Endothelial cell of umbilical vein (primary cell): ENCODE measurements at regions of chr4 and their contacts with region 1.

Region 1: DNA sequence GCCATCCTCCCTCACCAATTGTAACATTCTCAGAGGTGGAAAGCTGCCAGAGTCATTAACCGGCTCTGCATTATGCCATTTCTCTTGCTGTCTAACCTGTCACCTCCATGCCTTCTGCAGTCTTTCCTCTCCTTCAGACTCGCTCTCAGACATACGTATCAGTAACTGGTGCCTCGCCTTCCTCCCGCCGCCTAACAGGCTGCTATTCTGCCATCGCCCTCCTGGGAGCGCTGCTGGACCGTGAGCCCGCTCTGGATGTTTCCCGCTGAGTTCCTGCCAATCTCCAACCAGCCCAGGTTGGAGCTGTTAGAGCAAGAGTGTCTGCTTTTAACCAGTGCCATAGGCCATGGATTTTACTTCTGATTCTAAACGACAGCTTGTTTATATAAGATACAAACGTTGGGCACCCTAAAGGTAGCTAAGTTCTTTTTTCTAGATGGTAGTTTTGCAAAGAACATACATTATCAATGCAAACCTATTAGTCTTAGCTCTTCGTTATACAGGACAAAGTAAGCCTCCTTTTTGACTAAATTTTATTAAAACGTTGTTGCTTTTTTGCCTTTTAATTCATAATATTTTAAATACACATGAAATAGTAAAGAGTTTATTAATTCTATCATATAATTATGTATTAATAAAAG is 59.5 kb upstream of the NEIL3 start:
- DNase-seq: peak; percentile 65
- H3K4me3 ChIP-seq: no peak overlapping the region
- H3K27ac ChIP-seq: no peak overlapping the region
- H3K4me1 ChIP-seq: no peaks in the 10 kb centered on the region
- H3K27me3 ChIP-seq: peaks cover 0 to 2% of the 10 kb centered on the region in 2 experiments
- CTCF ChIP-seq: peak; percentile 87 to 94
- POLR2A ChIP-seq: no peak

Region 2: GRCh38 chr4:176377780-176378179 is 872.4 kb before region 1 on chr4:
- CTCF ChIA-PET with region 1: interaction called, 8 read pairs
- POLR2A ChIA-PET with region 1: no interaction called
- dilution Hi-C with region 1: no loop called
- intact Hi-C with region 1: loop called (anchors 2 kb)
- DNase-seq: peak; percentile 39
- H3K4me3 ChIP-seq: no peak overlapping the region
- H3K27ac ChIP-seq: no peak overlapping the region
- H3K4me1 ChIP-seq: peaks cover under 1% of the 10 kb centered on the region
- H3K27me3 ChIP-seq: peaks cover 0 to 5% of the 10 kb centered on the region in 2 experiments
- CTCF ChIP-seq: peak in 1 of 2 donors; percentile 14
- POLR2A ChIP-seq: no peak

Region 3: GRCh38 chr4:176988226-176988625 is 261.9 kb before region 1 on chr4:
- CTCF ChIA-PET with region 1: no interaction called
- POLR2A ChIA-PET with region 1: no interaction called
- dilution Hi-C with region 1: no loop called
- intact Hi-C with region 1: no loop called
- DNase-seq: peak; percentile 92
- H3K4me3 ChIP-seq: no peak overlapping the region
- H3K27ac ChIP-seq: peak overlapping the region; percentile 55
- H3K4me1 ChIP-seq: peaks cover 5% of the 10 kb centered on the region
- H3K27me3 ChIP-seq: no peaks in the 10 kb centered on the region
- CTCF ChIP-seq: no peak
- POLR2A ChIP-seq: no peak

Region 4: GRCh38 chr4:177128306-177128705 is 121.9 kb before region 1 on chr4:
- CTCF ChIA-PET with region 1: no interaction called
- POLR2A ChIA-PET with region 1: no interaction called
- dilution Hi-C with region 1: no loop called
- intact Hi-C with region 1: no loop called
- DNase-seq: peak; percentile 77
- H3K4me3 ChIP-seq: peak overlapping the region in 1 of 3 experiments; percentile 10
- H3K27ac ChIP-seq: peak overlapping the region; percentile 77
- H3K4me1 ChIP-seq: peaks cover 19% of the 10 kb centered on the region
- H3K27me3 ChIP-seq: no peaks in the 10 kb centered on the region
- CTCF ChIP-seq: no peak
- POLR2A ChIP-seq: no peak

Region 5: DNA sequence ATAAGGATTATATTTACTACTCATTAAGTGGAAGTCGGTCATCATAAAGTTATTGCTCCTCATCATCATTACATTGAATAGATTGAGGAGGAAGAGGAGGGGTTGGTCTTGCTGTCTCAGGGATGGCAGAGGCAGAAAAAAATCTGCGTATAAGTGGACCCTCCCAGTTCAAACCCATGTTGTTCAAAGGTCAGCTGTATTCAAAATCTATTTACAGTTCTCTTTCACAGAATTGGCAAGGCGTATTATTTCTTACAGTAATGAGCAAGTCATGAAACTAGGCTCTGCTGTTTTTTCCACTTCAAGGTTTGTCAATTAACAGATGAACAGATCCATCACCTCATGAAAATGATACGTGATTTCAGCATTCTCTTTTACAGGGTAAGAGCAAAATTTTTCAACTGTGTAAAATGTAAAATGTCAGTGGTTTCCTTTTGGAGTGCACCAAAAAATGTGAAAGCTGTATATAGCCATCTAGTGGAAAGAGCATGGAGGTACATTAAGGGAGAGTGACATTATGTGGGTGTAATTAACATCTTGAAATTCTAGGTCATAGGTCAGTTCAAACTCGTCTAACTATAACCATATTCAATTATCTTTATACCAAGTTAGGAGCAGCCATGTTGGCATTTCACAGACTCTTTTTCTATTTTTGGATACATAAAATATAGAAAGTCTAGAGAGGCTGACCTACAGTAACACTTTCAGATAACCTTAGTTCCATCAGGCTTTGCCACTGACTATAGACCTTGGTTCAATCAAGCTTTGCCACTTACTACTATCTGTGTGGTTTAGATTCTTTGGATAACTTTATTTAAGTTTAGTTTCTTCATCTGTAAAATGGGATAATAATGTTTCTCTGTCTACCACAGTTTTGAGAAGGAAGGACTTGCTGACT is 89.5 kb after region 1 on chr4:
- CTCF ChIA-PET with region 1: interaction called, 70 read pairs
- POLR2A ChIA-PET with region 1: no interaction called
- dilution Hi-C with region 1: no loop called
- intact Hi-C with region 1: loop called (anchors 1 kb)
- DNase-seq: peak; percentile 57
- H3K4me3 ChIP-seq: no peak overlapping the region
- H3K27ac ChIP-seq: no peak overlapping the region
- H3K4me1 ChIP-seq: no peaks in the 10 kb centered on the region
- H3K27me3 ChIP-seq: no peaks in the 10 kb centered on the region
- CTCF ChIP-seq: peak; percentile 38 to 51
- POLR2A ChIP-seq: no peak

Region 6: GRCh38 chr4:177555007-177555574 is 304.9 kb after region 1 on chr4:
- CTCF ChIA-PET with region 1: interaction called, 3 read pairs
- POLR2A ChIA-PET with region 1: no interaction called
- dilution Hi-C with region 1: no loop called
- intact Hi-C with region 1: loop called (anchors 10 kb)
- DNase-seq: peak; percentile 7
- H3K4me3 ChIP-seq: no peak overlapping the region
- H3K27ac ChIP-seq: no peak overlapping the region
- H3K4me1 ChIP-seq: no peaks in the 10 kb centered on the region
- H3K27me3 ChIP-seq: no peaks in the 10 kb centered on the region
- CTCF ChIP-seq: peak; percentile 29 to 32
- POLR2A ChIP-seq: no peak

Region 7: GRCh38 chr4:177667687-177668086 is 417.5 kb after region 1 on chr4:
- CTCF ChIA-PET with region 1: no interaction called
- POLR2A ChIA-PET with region 1: no interaction called
- dilution Hi-C with region 1: loop called (anchors 25 kb)
- intact Hi-C with region 1: no loop called
- DNase-seq: no peak
- H3K4me3 ChIP-seq: no peak overlapping the region
- H3K27ac ChIP-seq: no peak overlapping the region
- H3K4me1 ChIP-seq: no peaks in the 10 kb centered on the region
- H3K27me3 ChIP-seq: no peaks in the 10 kb centered on the region
- CTCF ChIP-seq: no peak
- POLR2A ChIP-seq: no peak